ENCODE measurements at regions of chr11 and their contacts with region 1.

Region 1: GRCh38 chr11:47642099-47642855 is at the start of gene MTCH2:
- DNase-seq: peak; percentile 96
- ATAC-seq: peak; percentile 98 to 99
- total RNA-seq, gene MTCH2: 82.8 to 92.8 TPM

Region 2: GRCh38 chr11:47714554-47715081 is 72.3 kb after region 1 on chr11:
- intact Hi-C with region 1: loop called in 1 of 2 experiments (anchors 5 kb)
- DNase-seq: no peak
- ATAC-seq: peak; percentile 35 to 50

Measured in left cardiac atrium (tissue), 4 donors.